K562 (cell line): ENCODE measurements at regions of chrX and their contacts with region 1.

Region 1: GRCh38 chrX:15366506-15367352 is 17.5 kb downstream of the VEGFD start:
- DNase-seq: no peak
- ATAC-seq: no peak
- H3K4me3 ChIP-seq: no peak overlapping the region
- H3K27ac ChIP-seq: no peak overlapping the region
- H3K4me1 ChIP-seq: no peaks in the 10 kb centered on the region
- H3K27me3 ChIP-seq: peaks cover 9 to 14% of the 10 kb centered on the region in 2 experiments; a peak in 3 of 5 replicates
- CTCF ChIP-seq: no peak
- EP300 ChIP-seq: no peak
- POLR2A ChIP-seq: no peak
- RAD21 ChIP-seq: no peak

Region 2: GRCh38 chrX:15579778-15580747 is 213.3 kb after region 1 on chrX:
- CTCF ChIA-PET with region 1: no interaction called
- POLR2A ChIA-PET with region 1: no interaction called
- in situ Hi-C with region 1: loop called (anchors 10 kb)
- intact Hi-C with region 1: no loop called
- DNase-seq: peak; percentile 66 to 92 (median 81)
- ATAC-seq: peak; percentile 97
- H3K4me3 ChIP-seq: no peak overlapping the region
- H3K27ac ChIP-seq: peak overlapping the region; percentile 88
- H3K4me1 ChIP-seq: peaks cover 0 to 25% of the 10 kb centered on the region in 2 experiments; a peak in 3 of 5 replicates
- H3K27me3 ChIP-seq: no peaks in the 10 kb centered on the region
- CTCF ChIP-seq: no peak
- EP300 ChIP-seq: no peak; the same call in 1 of the 2 replicates
- POLR2A ChIP-seq: no peak
- RAD21 ChIP-seq: no peak

Region 3: DNA sequence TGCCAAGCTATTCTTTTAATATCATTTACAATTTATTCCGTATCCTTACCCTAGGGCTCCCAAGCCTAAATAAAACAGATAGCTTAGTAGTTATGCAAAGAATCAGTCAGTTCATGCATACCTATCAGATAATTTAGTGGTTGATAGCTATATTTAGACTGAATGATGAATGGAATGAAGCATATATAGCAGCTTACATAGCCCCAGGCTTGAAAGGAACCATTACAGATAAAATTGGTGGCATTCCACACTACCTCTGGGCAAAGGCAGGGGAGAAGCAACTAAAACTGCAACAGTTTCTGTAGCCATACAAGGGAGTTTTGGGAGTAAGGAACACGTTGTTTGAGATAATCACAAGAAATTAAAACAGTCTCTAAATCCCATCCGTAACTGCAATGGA is 231.3 kb after region 1 on chrX:
- CTCF ChIA-PET with region 1: no interaction called
- POLR2A ChIA-PET with region 1: no interaction called
- in situ Hi-C with region 1: no loop called
- intact Hi-C with region 1: no loop called
- DNase-seq: no peak
- ATAC-seq: no peak
- H3K4me3 ChIP-seq: no peak overlapping the region
- H3K27ac ChIP-seq: no peak overlapping the region
- H3K4me1 ChIP-seq: no peaks in the 10 kb centered on the region
- H3K27me3 ChIP-seq: no peaks in the 10 kb centered on the region
- CTCF ChIP-seq: no peak
- EP300 ChIP-seq: no peak
- POLR2A ChIP-seq: no peak
- RAD21 ChIP-seq: no peak